Gastrocnemius medialis (tissue), 4 donors: ENCODE measurements at regions of chr20 and their contacts with region 1.

Region 1: GRCh38 chr20:18507218-18508021 is at the start of gene SEC23B:
- DNase-seq: peak; percentile 95 to 96
- ATAC-seq: peak; percentile 99 to 100
- H3K4me3 ChIP-seq: peak within 1 kb of the TSS; percentile 76 to 95 (median 86)
- H3K27ac ChIP-seq: peak within 1 kb of the TSS; percentile 94 to 99 (median 96)
- H3K4me1 ChIP-seq: peaks cover 8 to 10% of the 10 kb centered on the region in 2 donors
- H3K27me3 ChIP-seq: no peaks in the 10 kb centered on the region
- CTCF ChIP-seq: no peak
- POLR2A ChIP-seq: peak; percentile 76 to 77
- total RNA-seq, gene SEC23B: 7.2 to 10.7 (median 8.1) TPM

Region 2: DNA sequence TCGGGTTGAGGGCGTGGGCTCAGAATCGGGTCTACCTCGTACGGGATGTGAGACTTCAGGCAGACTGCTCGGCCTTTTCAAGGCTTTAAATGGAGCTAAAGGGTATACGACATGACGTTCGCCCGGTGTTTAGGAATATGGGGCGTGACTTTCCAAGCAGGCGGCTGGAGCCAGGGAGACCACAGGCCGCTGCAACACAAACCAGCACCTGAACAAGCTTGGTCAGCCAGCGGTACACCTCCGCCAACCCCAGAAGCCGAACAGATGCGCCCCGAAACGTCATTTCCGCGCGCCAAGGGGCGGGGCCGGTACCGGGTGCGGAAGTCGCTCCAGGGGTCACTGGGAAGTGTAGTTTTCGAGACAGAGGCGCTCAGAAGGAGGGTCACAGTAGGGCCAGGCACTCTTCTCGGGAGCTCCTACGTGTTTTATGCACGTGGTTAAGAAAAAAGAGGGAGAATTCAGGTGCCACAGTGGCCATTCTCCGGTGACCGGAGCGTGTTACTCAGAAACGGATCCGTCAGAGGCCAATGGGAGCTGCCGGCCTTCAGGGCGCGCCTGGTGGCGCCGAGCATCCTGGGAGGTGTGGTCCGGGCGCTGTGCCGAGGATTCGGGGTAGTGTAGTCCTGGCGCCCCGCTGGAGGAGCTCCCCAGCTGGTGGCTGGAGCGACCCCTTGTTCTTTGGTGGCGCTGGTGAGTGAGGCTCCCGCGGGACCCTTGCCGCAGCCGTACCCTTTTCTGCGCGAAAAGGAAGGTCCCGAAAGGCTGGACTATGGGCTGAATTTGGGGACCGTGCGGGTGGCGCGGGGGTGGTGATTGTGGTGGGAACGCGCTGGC is 219.3 kb before region 1 on chr20 and contains the start of gene ZNF133:
- in situ Hi-C with region 1: no loop called
- intact Hi-C with region 1: loop called (anchors 1 kb)
- DNase-seq: peak; percentile 93 to 95
- ATAC-seq: peak; percentile 99
- H3K4me3 ChIP-seq: peak within 1 kb of the TSS; percentile 75 to 100 (median 92)
- H3K27ac ChIP-seq: peak within 1 kb of the TSS; percentile 84 to 98 (median 96)
- H3K4me1 ChIP-seq: peaks cover 10 to 13% of the 10 kb centered on the region in 2 donors
- H3K27me3 ChIP-seq: peaks cover 0 to 18% (median 0%) of the 10 kb centered on the region in 3 donors
- CTCF ChIP-seq: no peak
- POLR2A ChIP-seq: peak; percentile 59 to 66
- total RNA-seq, gene ZNF133: 6.9 to 15.8 (median 11.0) TPM

Region 3: GRCh38 chr20:18496740-18497592 is 10.5 kb before region 1 on chr20 and contains the start of gene RBBP9:
- in situ Hi-C with region 1: no loop called
- intact Hi-C with region 1: loop called (anchors 1 kb)
- DNase-seq: peak; percentile 69 to 75
- ATAC-seq: peak; percentile 94 to 97
- H3K4me3 ChIP-seq: peak within 1 kb of the TSS; percentile 70 to 92 (median 88)
- H3K27ac ChIP-seq: peak within 1 kb of the TSS; percentile 67 to 73 (median 72)
- H3K4me1 ChIP-seq: peaks cover 9 to 14% of the 10 kb centered on the region in 2 donors
- H3K27me3 ChIP-seq: no peaks in the 10 kb centered on the region
- CTCF ChIP-seq: no peak
- POLR2A ChIP-seq: no peak
- total RNA-seq, gene RBBP9: 3.0 to 17.5 (median 6.1) TPM

Region 4: GRCh38 chr20:18587665-18588573 is 80.5 kb after region 1 on chr20 and contains the start of gene DTD1:
- in situ Hi-C with region 1: no loop called
- intact Hi-C with region 1: loop called (anchors 2 kb)
- DNase-seq: peak; percentile 84 to 90
- ATAC-seq: peak; percentile 94 to 95
- H3K4me3 ChIP-seq: peak within 1 kb of the TSS; percentile 63 to 83 (median 73)
- H3K27ac ChIP-seq: peak within 1 kb of the TSS; percentile 45 to 76 (median 68)
- H3K4me1 ChIP-seq: peaks cover 8 to 12% of the 10 kb centered on the region in 2 donors
- H3K27me3 ChIP-seq: no peaks in the 10 kb centered on the region
- CTCF ChIP-seq: peak; percentile 47 to 87 (median 72)
- POLR2A ChIP-seq: peak; percentile 44 to 53
- total RNA-seq, gene DTD1: 18.0 to 33.0 (median 26.5) TPM